GM10248 (cell line): ENCODE measurements at regions of chr1 and their contacts with region 1.

Region 1: GRCh38 chr1:167220537-167221125 is at the start of gene POU2F1:
- DNase-seq: peak; percentile 95
- CTCF ChIP-seq: peak; percentile 57

Region 2: GRCh38 chr1:166785987-166786386 is 434.6 kb before region 1 on chr1:
- CTCF ChIA-PET with region 1: no interaction called
- POLR2A ChIA-PET with region 1: no interaction called
- DNase-seq: no peak
- CTCF ChIP-seq: no peak

Region 3: GRCh38 chr1:167066333-167067122 is 154.1 kb before region 1 on chr1:
- CTCF ChIA-PET with region 1: interaction called, 12 read pairs
- POLR2A ChIA-PET with region 1: no interaction called
- DNase-seq: peak; percentile 90
- CTCF ChIP-seq: peak; percentile 94

Region 4: GRCh38 chr1:167244244-167244643 is 23.6 kb after region 1 on chr1:
- CTCF ChIA-PET with region 1: interaction called, 10 read pairs
- POLR2A ChIA-PET with region 1: no interaction called
- DNase-seq: no peak
- CTCF ChIP-seq: no peak

Region 5: DNA sequence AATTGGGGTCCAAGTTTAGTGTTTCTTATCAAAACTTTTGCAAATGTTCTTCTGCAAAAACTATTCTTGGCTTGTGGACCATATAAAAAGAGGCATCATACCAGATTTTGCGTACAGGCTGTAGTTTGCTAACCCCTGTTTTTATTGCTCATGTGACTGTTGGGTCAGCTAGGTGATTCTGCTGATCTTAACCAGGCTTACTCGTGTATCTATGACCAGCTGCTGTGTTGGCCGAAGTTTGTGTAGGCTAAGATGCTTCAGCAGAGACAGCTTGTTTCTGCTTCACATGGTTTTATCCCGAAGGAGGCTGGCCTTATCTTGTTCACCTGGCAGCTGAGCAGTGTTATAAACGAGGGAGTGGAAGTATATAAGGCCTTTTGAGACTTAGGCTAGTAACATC is 38.2 kb after region 1 on chr1:
- CTCF ChIA-PET with region 1: interaction called, 14 read pairs
- POLR2A ChIA-PET with region 1: no interaction called
- DNase-seq: no peak
- CTCF ChIP-seq: no peak